ENCODE measurements at regions of chr16 and their contacts with region 1.

Region 1: DNA sequence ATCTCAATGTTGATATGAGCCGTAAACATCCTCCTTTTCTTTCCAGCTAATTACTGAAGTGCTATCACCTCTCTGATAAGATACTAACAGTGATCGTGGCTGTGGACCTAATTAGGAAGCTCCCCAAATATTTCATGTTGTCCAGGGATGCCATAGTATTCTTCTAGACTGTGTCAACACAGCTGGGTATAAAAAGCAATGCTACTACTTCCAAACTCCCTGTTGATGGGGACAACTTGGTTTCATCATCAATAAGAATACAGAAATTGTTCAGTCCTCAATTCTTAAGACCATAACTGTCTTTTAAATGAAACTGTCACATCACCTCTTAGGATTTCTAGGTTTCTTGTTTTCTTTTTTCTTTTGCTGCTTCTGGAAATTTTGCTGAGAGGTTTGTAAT is 530.6 kb downstream of the TOX3 start:
- DNase-seq: no peak
- H3K4me3 ChIP-seq: no peak overlapping the region
- H3K27ac ChIP-seq: no peak overlapping the region
- H3K4me1 ChIP-seq: no peaks in the 10 kb centered on the region
- H3K27me3 ChIP-seq: no peaks in the 10 kb centered on the region
- CTCF ChIP-seq: no peak
- POLR2A ChIP-seq: no peak

Region 2: DNA sequence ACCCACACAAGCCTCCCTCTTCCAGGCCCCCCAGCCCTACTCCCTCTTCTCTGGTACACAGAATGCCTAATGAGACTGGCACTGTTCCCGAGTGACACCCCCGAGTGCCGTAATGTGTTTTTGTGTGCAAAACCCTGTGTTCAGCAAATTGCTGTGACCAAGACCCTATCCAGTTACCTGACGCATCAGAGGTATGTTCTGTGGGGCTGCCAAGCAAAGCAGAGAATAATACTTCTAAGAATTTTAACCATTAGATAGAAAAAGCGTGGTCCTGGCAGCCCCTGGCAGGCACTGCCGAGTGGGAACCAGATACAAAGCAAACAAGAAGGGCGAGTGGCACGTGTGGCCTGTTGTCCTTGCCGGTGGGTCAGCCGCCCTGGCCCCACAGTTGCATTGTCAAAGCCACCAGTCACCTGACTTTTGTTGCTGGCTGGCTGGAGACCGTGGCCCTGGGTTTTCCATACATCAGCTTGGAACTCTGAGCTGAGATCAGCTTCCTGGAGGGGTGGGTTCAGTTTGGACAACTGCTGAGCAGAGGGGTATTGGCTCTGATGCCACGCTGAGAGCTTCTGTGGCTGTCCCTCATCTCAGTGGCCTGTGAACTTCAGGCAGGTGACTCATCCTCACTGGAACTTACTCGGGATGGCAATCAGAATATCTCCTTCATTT is 1578.5 kb before region 1 on chr16:
- intact Hi-C with region 1: loop called (anchors 10 kb)
- DNase-seq: no peak
- H3K4me3 ChIP-seq: no peak overlapping the region
- H3K27ac ChIP-seq: no peak overlapping the region
- H3K4me1 ChIP-seq: no peaks in the 10 kb centered on the region
- H3K27me3 ChIP-seq: peaks cover 0 to 13% of the 10 kb centered on the region in 2 donors
- CTCF ChIP-seq: no peak
- POLR2A ChIP-seq: no peak

Region 3: GRCh38 chr16:51888534-51888933 is 127.9 kb before region 1 on chr16:
- intact Hi-C with region 1: no loop called
- DNase-seq: no peak
- H3K4me3 ChIP-seq: no peak overlapping the region
- H3K27ac ChIP-seq: no peak overlapping the region
- H3K4me1 ChIP-seq: no peaks in the 10 kb centered on the region
- H3K27me3 ChIP-seq: peaks cover 0 to 2% of the 10 kb centered on the region in 2 donors
- CTCF ChIP-seq: no peak
- POLR2A ChIP-seq: no peak

Region 4: GRCh38 chr16:52078716-52079655 is 62.6 kb after region 1 on chr16:
- intact Hi-C with region 1: no loop called
- DNase-seq: peak in 1 of 2 donors; percentile 27
- H3K4me3 ChIP-seq: no peak overlapping the region
- H3K27ac ChIP-seq: peak overlapping the region; percentile 43 to 70
- H3K4me1 ChIP-seq: no peaks in the 10 kb centered on the region
- H3K27me3 ChIP-seq: no peaks in the 10 kb centered on the region
- CTCF ChIP-seq: no peak
- POLR2A ChIP-seq: no peak

Region 5: DNA sequence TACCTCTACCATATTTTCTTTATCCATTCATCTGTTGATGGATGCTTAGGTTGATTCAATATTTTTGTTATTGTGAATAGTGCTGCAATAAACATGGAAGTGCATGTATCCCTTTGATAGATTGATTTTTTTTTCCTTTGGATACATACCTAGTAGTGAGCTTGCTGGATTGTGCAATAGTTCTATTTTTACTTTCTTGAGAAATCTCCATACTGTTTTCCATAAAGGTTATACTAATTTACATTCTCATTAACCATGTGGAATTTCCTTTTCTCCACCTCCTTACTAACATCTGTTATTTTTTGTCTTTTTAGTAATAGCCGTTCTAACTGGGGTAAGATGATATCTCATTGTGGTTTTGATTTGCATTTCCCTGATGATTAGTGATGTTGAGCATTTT is 655.2 kb after region 1 on chr16:
- intact Hi-C with region 1: loop called (anchors 10 kb)
- DNase-seq: no peak
- H3K4me3 ChIP-seq: no peak overlapping the region
- H3K27ac ChIP-seq: no peak overlapping the region
- H3K4me1 ChIP-seq: no peaks in the 10 kb centered on the region
- H3K27me3 ChIP-seq: no peaks in the 10 kb centered on the region
- CTCF ChIP-seq: no peak
- POLR2A ChIP-seq: no peak

Measured in breast epithelium (tissue), 4 donors.